CD4-positive, alpha-beta T cell (primary cell): ENCODE measurements at regions of chr12 and their contacts with region 1.

Region 1: GRCh38 chr12:56636675-56637540 is 6.8 kb upstream of the BAZ2A start:
- DNase-seq: peak; percentile 87 to 98 (median 93)
- ATAC-seq: peak; percentile 72
- H3K4me3 ChIP-seq: peak overlapping the region; percentile 76
- H3K4me3 Mint-ChIP-seq: peak overlapping the region; percentile 94
- H3K27ac ChIP-seq: peak overlapping the region; percentile 56 to 84
- H3K27ac Mint-ChIP-seq: peak overlapping the region; percentile 98
- H3K4me1 ChIP-seq: peaks cover 56% of the 10 kb centered on the region
- H3K4me1 Mint-ChIP-seq: peaks cover 65% of the 10 kb centered on the region
- H3K27me3 ChIP-seq: no peaks in the 10 kb centered on the region
- H3K27me3 Mint-ChIP-seq: no peaks in the 10 kb centered on the region
- CTCF ChIP-seq: peak; percentile 72

Region 2: GRCh38 chr12:55817346-55818139 is 819.4 kb before region 1 on chr12 and contains the starts of genes ORMDL2 and SARNP:
- CTCF ChIA-PET with region 1: no interaction called
- POLR2A ChIA-PET with region 1: no interaction called
- intact Hi-C with region 1: loop called in 1 of 2 experiments (anchors 10 kb)
- DNase-seq: peak; percentile 88 to 100 (median 92)
- ATAC-seq: peak; percentile 92
- H3K4me3 ChIP-seq: peak within 1 kb of the TSS; percentile 97
- H3K4me3 Mint-ChIP-seq: no peak within 1 kb of the TSS
- H3K27ac ChIP-seq: peak within 1 kb of the TSS; percentile 71 to 87
- H3K27ac Mint-ChIP-seq: no peak within 1 kb of the TSS
- H3K4me1 ChIP-seq: peaks cover 40% of the 10 kb centered on the region
- H3K4me1 Mint-ChIP-seq: peaks cover 28% of the 10 kb centered on the region
- H3K27me3 ChIP-seq: no peaks in the 10 kb centered on the region
- H3K27me3 Mint-ChIP-seq: no peaks in the 10 kb centered on the region
- CTCF ChIP-seq: no peak
- total RNA-seq, gene ORMDL2: 13.0 to 14.9 TPM
- total RNA-seq, gene SARNP: 38.2 to 38.6 TPM

Region 3: DNA sequence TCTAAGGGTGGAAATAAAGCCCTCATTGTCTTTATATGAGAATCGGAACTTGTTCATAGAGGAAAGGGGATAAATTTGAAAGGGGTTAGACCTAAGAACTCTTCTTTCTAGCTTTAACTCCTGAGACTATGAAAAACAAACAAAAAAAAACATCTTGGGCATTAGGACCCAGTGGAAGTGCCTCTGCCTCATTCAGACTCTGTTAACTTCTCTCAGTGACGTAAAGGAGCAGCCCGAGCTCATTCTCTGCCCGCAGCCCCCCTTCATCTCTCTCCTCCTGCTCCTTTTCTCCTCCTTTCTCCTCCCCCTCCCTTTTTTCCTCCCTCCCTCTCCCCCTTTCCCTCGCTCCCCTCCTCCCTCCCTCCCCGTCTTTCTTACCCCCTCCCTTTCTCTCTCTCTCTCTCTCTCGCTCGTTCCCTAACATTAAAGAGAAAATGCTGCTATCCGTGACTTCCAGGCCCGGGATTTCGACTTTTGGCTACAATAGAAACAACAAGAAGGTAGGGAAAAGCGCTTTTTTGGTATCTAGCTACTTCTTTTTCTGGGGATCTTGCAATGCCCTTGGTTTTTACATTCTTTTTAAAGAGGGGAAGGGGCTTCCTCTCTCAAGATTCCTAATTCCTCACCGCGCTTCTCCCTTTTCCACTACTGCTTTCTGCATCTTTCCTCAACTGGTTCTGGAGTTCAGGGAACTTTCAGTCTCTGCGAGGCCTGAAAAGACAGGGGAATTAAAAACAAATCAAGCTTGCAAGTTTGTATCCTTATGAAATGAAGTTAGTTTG is 115.1 kb before region 1 on chr12 and contains the start of gene RBMS2:
- CTCF ChIA-PET with region 1: no interaction called
- POLR2A ChIA-PET with region 1: interaction called, 10 read pairs
- intact Hi-C with region 1: no loop called
- DNase-seq: peak in 13 of 14 experiments; percentile 10 to 82 (median 31)
- ATAC-seq: peak; percentile 93
- H3K4me3 ChIP-seq: peak within 1 kb of the TSS; percentile 54
- H3K4me3 Mint-ChIP-seq: peak within 1 kb of the TSS; percentile 98
- H3K27ac ChIP-seq: peak within 1 kb of the TSS in 1 of 2 donors; percentile 14
- H3K27ac Mint-ChIP-seq: peak within 1 kb of the TSS; percentile 71
- H3K4me1 ChIP-seq: peaks cover 20% of the 10 kb centered on the region
- H3K4me1 Mint-ChIP-seq: peaks cover 38% of the 10 kb centered on the region
- H3K27me3 ChIP-seq: no peaks in the 10 kb centered on the region
- H3K27me3 Mint-ChIP-seq: no peaks in the 10 kb centered on the region
- CTCF ChIP-seq: no peak
- total RNA-seq, gene RBMS2: 5.1 to 10.8 TPM

Region 4: GRCh38 chr12:56616925-56617324 is 20.0 kb before region 1 on chr12:
- CTCF ChIA-PET with region 1: interaction called, 30 read pairs
- POLR2A ChIA-PET with region 1: interaction called, 69 read pairs
- intact Hi-C with region 1: no loop called
- DNase-seq: no peak
- ATAC-seq: no peak
- H3K4me3 ChIP-seq: no peak overlapping the region
- H3K4me3 Mint-ChIP-seq: no peak overlapping the region
- H3K27ac ChIP-seq: no peak overlapping the region
- H3K27ac Mint-ChIP-seq: no peak overlapping the region
- H3K4me1 ChIP-seq: peaks cover 15% of the 10 kb centered on the region
- H3K4me1 Mint-ChIP-seq: peaks cover 23% of the 10 kb centered on the region
- H3K27me3 ChIP-seq: no peaks in the 10 kb centered on the region
- H3K27me3 Mint-ChIP-seq: no peaks in the 10 kb centered on the region
- CTCF ChIP-seq: no peak

Region 5: GRCh38 chr12:56688129-56688845 is 51.4 kb after region 1 on chr12 and contains the start of gene PTGES3:
- CTCF ChIA-PET with region 1: interaction called, 27 read pairs
- POLR2A ChIA-PET with region 1: interaction called, 139 read pairs
- intact Hi-C with region 1: loop called (anchors 2 kb)
- DNase-seq: peak; percentile 93 to 100 (median 97)
- ATAC-seq: peak; percentile 73
- H3K4me3 ChIP-seq: peak within 1 kb of the TSS; percentile 96
- H3K4me3 Mint-ChIP-seq: peak within 1 kb of the TSS; percentile 100
- H3K27ac ChIP-seq: peak within 1 kb of the TSS; percentile 98 to 99
- H3K27ac Mint-ChIP-seq: peak within 1 kb of the TSS; percentile 96
- H3K4me1 ChIP-seq: peaks cover 39% of the 10 kb centered on the region
- H3K4me1 Mint-ChIP-seq: peaks cover 43% of the 10 kb centered on the region
- H3K27me3 ChIP-seq: no peaks in the 10 kb centered on the region
- H3K27me3 Mint-ChIP-seq: no peaks in the 10 kb centered on the region
- CTCF ChIP-seq: no peak
- total RNA-seq, gene PTGES3: 146 to 154 TPM

Region 6: GRCh38 chr12:57088459-57089248 is 451.7 kb after region 1 on chr12 and contains the start of gene NAB2:
- CTCF ChIA-PET with region 1: no interaction called
- POLR2A ChIA-PET with region 1: no interaction called
- intact Hi-C with region 1: loop called in 1 of 2 experiments (anchors 10 kb)
- DNase-seq: peak; percentile 85 to 99 (median 95)
- ATAC-seq: peak; percentile 57
- H3K4me3 ChIP-seq: peak within 1 kb of the TSS; percentile 82
- H3K4me3 Mint-ChIP-seq: peak within 1 kb of the TSS; percentile 98
- H3K27ac ChIP-seq: peak within 1 kb of the TSS; percentile 99
- H3K27ac Mint-ChIP-seq: peak within 1 kb of the TSS; percentile 98
- H3K4me1 ChIP-seq: peaks cover 71% of the 10 kb centered on the region
- H3K4me1 Mint-ChIP-seq: peaks cover 70% of the 10 kb centered on the region
- H3K27me3 ChIP-seq: no peaks in the 10 kb centered on the region
- H3K27me3 Mint-ChIP-seq: no peaks in the 10 kb centered on the region
- CTCF ChIP-seq: no peak
- total RNA-seq, gene NAB2: 4.8 to 6.1 TPM